ENCODE measurements at regions of chr3 and their contacts with region 1.

Region 1: GRCh38 chr3:126752303-126752842 is 48.3 kb downstream of the CHCHD6 start:
- DNase-seq: peak; percentile 72 to 88 (median 79)
- ATAC-seq: peak; percentile 85 to 94 (median 90)
- H3K4me3 ChIP-seq: no peak overlapping the region
- H3K27ac ChIP-seq: no peak overlapping the region
- H3K4me1 ChIP-seq: peaks cover 0 to 38% (median 12%) of the 10 kb centered on the region in 12 donors
- H3K27me3 ChIP-seq: no peaks in the 10 kb centered on the region
- CTCF ChIP-seq: peak; percentile 74 to 91 (median 86)
- POLR2A ChIP-seq: no peak

Region 2: GRCh38 chr3:126721246-126721645 is 31.1 kb before region 1 on chr3:
- intact Hi-C with region 1: no loop called
- DNase-seq: no peak
- ATAC-seq: no peak
- H3K4me3 ChIP-seq: no peak overlapping the region
- H3K27ac ChIP-seq: no peak overlapping the region
- H3K4me1 ChIP-seq: no peaks in the 10 kb centered on the region
- H3K27me3 ChIP-seq: no peaks in the 10 kb centered on the region
- CTCF ChIP-seq: no peak
- POLR2A ChIP-seq: no peak

Region 3: GRCh38 chr3:127172781-127173515 is 420.6 kb after region 1 on chr3:
- intact Hi-C with region 1: loop called in 9 of 10 experiments (anchors 2 to 10 kb)
- DNase-seq: no peak
- ATAC-seq: no peak
- H3K4me3 ChIP-seq: no peak overlapping the region
- H3K27ac ChIP-seq: no peak overlapping the region
- H3K4me1 ChIP-seq: peaks cover 0 to 7% (median 0%) of the 10 kb centered on the region in 12 donors
- H3K27me3 ChIP-seq: peaks cover 0 to 17% (median 0%) of the 10 kb centered on the region in 9 donors
- CTCF ChIP-seq: no peak
- POLR2A ChIP-seq: no peak

Region 4: DNA sequence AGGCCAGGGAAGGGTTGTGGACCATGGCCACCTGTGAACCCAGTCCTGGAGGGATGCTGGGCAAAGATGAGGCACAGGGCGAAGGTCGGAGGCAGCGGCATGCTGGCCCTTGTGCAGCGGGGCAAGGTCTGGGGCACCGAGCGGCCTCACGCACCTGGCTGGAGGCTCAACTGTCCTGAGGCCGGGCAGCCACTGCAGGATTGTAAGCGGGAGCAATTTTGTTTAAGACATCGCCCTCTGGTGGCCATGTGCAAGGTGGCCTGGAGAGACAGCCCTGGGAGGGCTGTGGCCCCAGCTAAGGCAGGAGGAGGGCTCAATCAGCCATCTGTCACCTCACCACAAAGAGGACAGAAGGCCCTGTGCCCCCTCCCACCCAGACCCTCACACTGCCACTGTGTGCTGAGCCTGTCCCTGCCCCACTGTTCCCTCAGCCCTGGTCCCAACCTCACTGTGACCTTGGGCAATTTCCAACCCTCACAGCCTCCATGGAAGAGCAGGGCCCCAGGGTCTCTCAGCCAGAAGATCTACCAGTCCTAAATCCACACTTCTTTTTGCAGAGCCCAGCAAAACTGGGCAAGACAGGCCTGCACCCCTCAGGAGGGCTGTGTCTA is 791.9 kb after region 1 on chr3:
- intact Hi-C with region 1: loop called in 9 of 10 experiments (anchors 5 to 10 kb)
- DNase-seq: peak; percentile 61 to 81 (median 76)
- ATAC-seq: peak in 3 of 4 donors; percentile 44 to 58 (median 46)
- H3K4me3 ChIP-seq: no peak overlapping the region
- H3K27ac ChIP-seq: no peak overlapping the region
- H3K4me1 ChIP-seq: peaks cover 0 to 16% (median 5%) of the 10 kb centered on the region in 12 donors
- H3K27me3 ChIP-seq: no peaks in the 10 kb centered on the region
- CTCF ChIP-seq: peak; percentile 68 to 85 (median 76)
- POLR2A ChIP-seq: no peak